ENCODE measurements at regions of chr2 and their contacts with region 1.

Region 1: GRCh38 chr2:216838151-216838550 is 21.7 kb downstream of the TNP1 start:
- DNase-seq: no peak
- ATAC-seq: no peak
- H3K4me3 Mint-ChIP-seq: no peak overlapping the region
- H3K27ac Mint-ChIP-seq: no peak overlapping the region
- H3K4me1 Mint-ChIP-seq: no peaks in the 10 kb centered on the region
- H3K27me3 Mint-ChIP-seq: peaks cover 8% of the 10 kb centered on the region
- CTCF ChIP-seq: no peak

Region 2: DNA sequence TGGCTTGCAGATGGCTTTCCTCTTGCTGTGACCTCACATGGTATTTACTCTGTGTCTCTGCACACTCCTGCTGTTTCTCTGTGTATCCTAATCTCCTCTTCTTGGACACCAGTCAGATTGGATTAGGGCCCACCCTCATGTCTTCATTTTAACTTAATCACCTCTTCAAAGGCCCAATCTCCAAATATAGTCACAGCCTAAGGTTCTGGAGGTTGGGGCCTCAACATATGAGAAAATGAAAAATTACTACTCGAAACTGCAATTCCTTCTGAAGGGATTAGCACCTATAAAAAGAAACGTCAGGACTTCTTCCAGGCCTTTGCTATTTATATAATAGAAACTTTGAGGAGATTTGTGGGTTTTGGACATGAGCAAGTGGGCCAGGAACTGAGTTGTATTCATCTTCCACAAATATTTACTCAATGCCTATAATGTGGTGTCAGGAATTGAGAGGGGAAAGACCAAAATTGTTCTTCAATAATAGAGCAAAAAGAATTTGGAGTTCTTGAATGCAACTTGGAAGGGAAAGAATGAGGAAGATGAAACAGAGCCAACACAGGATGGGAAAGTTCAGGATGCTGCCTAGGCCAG is 1132.3 kb before region 1 on chr2:
- CTCF ChIA-PET with region 1: no interaction called
- POLR2A ChIA-PET with region 1: no interaction called
- intact Hi-C with region 1: no loop called
- DNase-seq: no peak
- ATAC-seq: no peak
- H3K4me3 Mint-ChIP-seq: no peak overlapping the region
- H3K27ac Mint-ChIP-seq: no peak overlapping the region
- H3K4me1 Mint-ChIP-seq: no peaks in the 10 kb centered on the region
- H3K27me3 Mint-ChIP-seq: peaks cover 14% of the 10 kb centered on the region
- CTCF ChIP-seq: no peak

Region 3: GRCh38 chr2:217459680-217460405 is 621.7 kb after region 1 on chr2:
- CTCF ChIA-PET with region 1: no interaction called
- POLR2A ChIA-PET with region 1: no interaction called
- intact Hi-C with region 1: loop called (anchors 5 kb)
- DNase-seq: no peak
- ATAC-seq: no peak
- H3K4me3 Mint-ChIP-seq: no peak overlapping the region
- H3K27ac Mint-ChIP-seq: no peak overlapping the region
- H3K4me1 Mint-ChIP-seq: peaks cover 5% of the 10 kb centered on the region
- H3K27me3 Mint-ChIP-seq: no peaks in the 10 kb centered on the region
- CTCF ChIP-seq: no peak